Panc1 (cell line): ENCODE measurements at regions of chr5 and their contacts with region 1.

Region 1: GRCh38 chr5:170747851-170748250 is 35.7 kb upstream of the GABRP start:
- DNase-seq: no peak
- ATAC-seq: peak; percentile 15; the same call in 1 of the 2 replicates
- H3K4me3 ChIP-seq: no peak overlapping the region
- H3K27ac ChIP-seq: no peak overlapping the region
- H3K4me1 ChIP-seq: no peaks in the 10 kb centered on the region
- H3K27me3 ChIP-seq: 0 out of 2 replicates have a peak, but pooled peaks cover 2% of the 10 kb centered on the region
- CTCF ChIP-seq: peak; percentile 63

Region 2: DNA sequence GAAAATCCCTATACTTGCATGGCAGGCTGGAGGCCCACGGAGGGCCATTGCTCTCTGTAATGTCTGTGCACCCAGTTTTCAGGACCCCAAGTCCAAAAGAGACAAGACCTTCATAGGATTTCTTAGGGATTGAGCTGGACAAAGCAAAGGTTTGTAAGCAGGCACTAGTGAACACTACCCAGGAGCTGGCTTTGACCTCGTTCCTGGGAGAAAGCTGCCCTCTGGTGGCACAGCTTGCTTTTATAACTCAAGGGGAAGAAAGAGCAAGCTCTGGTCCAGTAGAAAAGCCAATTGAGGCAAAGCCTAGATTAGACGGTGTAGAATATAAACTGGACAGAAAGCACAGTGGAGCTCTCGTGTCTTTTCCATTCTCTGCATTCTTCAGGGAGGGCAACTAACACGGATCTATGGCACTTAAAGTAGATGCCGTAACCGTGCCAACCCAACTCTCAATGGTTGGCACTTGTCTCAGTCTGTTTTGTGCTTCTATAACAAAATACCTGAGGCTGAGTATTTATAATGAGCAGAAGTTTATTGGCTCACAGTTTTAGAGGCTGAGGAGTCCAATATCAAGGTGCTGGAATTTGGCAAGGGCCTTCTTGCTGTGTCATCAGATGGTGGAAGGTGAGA is 43.6 kb after region 1 on chr5:
- CTCF ChIA-PET with region 1: interaction called, 17 read pairs
- POLR2A ChIA-PET with region 1: no interaction called
- in situ Hi-C with region 1: no loop called
- intact Hi-C with region 1: loop called (anchors 1 kb)
- DNase-seq: no peak
- ATAC-seq: peak; percentile 90
- H3K4me3 ChIP-seq: no peak overlapping the region
- H3K27ac ChIP-seq: no peak overlapping the region
- H3K4me1 ChIP-seq: no peaks in the 10 kb centered on the region
- H3K27me3 ChIP-seq: no peaks in the 10 kb centered on the region
- CTCF ChIP-seq: peak; percentile 74

Region 3: GRCh38 chr5:170917113-170917512 is 169.3 kb after region 1 on chr5:
- CTCF ChIA-PET with region 1: no interaction called
- POLR2A ChIA-PET with region 1: no interaction called
- in situ Hi-C with region 1: no loop called
- intact Hi-C with region 1: loop called (anchors 10 kb)
- DNase-seq: no peak
- ATAC-seq: no peak
- H3K4me3 ChIP-seq: no peak overlapping the region
- H3K27ac ChIP-seq: no peak overlapping the region
- H3K4me1 ChIP-seq: no peaks in the 10 kb centered on the region
- H3K27me3 ChIP-seq: no peaks in the 10 kb centered on the region
- CTCF ChIP-seq: no peak; the same call in 1 of the 2 replicates

Region 4: DNA sequence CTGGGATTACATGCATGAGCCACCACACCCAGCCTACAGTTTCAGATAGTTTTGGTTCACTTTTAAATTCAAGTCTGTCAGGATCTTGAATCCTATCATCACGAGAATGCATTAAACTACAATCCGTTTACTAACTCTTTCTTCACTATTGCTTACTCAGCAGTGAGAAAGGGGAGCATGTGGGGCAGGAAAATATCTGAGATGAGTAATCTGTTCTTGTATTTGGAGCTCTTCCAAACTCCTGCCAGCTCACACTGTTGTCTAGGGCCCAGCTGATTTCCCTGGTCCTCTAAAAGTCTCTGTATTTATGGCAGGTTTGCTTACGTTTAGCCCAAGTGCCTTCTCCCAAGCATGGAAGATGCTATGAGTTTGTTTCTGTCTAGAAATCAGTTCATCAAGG is 823.8 kb after region 1 on chr5:
- CTCF ChIA-PET with region 1: no interaction called
- POLR2A ChIA-PET with region 1: no interaction called
- in situ Hi-C with region 1: no loop called
- intact Hi-C with region 1: no loop called
- DNase-seq: no peak
- ATAC-seq: no peak
- H3K4me3 ChIP-seq: no peak overlapping the region
- H3K27ac ChIP-seq: no peak overlapping the region
- H3K4me1 ChIP-seq: no peaks in the 10 kb centered on the region
- H3K27me3 ChIP-seq: peaks cover 4% of the 10 kb centered on the region
- CTCF ChIP-seq: no peak